ENCODE measurements at regions of chr14 and their contacts with region 1.

Region 1: DNA sequence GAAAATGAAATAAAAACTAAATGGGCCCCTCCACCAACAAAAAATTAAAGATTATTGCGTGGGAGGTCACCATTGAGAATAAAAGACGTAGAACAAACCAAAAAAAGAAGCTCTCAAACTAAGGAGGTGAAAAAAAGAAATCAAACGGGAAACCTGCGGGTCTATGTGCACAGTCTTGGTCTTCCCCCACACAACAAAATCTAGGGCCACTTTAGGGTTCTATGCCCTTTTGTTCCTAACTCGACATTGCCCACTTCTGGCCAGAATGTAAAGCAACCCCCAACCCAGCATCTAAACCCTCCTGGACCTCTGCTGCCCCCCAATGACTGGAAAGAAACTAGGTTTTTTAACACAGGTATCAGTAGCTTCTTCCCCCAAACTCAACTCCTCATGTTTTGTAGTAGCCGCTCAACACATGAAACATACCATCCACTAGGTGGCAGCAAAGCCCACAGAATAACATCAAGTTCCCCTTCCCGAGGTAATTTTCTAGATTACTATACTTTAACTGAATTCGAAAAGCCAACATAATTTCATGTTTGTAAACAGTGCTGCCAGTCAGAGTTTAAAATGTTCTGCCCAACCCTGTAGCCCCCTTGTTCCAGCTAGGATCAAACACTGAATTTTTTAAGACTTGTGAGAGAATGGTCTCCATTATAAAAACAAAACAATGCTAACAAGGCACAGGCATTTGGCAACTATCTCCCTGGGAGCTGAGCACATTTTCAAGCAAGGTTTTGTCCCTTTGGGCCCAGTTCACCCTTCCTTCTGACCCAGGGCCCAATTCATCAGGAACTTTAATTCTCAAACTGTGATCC is 18.7 kb downstream of the DAD1 start:
- DNase-seq: no peak
- ATAC-seq: peak; percentile 95
- H3K4me3 ChIP-seq: no peak overlapping the region
- H3K27ac ChIP-seq: peak overlapping the region; percentile 1
- H3K4me1 ChIP-seq: peaks cover 4% of the 10 kb centered on the region
- H3K27me3 ChIP-seq: no peaks in the 10 kb centered on the region
- CTCF ChIP-seq: peak; percentile 84

Region 2: GRCh38 chr14:22653012-22653621 is 82.8 kb after region 1 on chr14:
- intact Hi-C with region 1: loop called (anchors 10 kb)
- DNase-seq: peak; percentile 69
- ATAC-seq: peak; percentile 95
- H3K4me3 ChIP-seq: no peak overlapping the region
- H3K27ac ChIP-seq: no peak overlapping the region
- H3K4me1 ChIP-seq: peaks cover 4% of the 10 kb centered on the region
- H3K27me3 ChIP-seq: no peaks in the 10 kb centered on the region
- CTCF ChIP-seq: peak; percentile 80

Measured in upper lobe of right lung (tissue), 1 donor.